Dorsolateral prefrontal cortex (tissue), 120 donors: ENCODE measurements at regions of chr9 and their contacts with region 1.

Region 1: DNA sequence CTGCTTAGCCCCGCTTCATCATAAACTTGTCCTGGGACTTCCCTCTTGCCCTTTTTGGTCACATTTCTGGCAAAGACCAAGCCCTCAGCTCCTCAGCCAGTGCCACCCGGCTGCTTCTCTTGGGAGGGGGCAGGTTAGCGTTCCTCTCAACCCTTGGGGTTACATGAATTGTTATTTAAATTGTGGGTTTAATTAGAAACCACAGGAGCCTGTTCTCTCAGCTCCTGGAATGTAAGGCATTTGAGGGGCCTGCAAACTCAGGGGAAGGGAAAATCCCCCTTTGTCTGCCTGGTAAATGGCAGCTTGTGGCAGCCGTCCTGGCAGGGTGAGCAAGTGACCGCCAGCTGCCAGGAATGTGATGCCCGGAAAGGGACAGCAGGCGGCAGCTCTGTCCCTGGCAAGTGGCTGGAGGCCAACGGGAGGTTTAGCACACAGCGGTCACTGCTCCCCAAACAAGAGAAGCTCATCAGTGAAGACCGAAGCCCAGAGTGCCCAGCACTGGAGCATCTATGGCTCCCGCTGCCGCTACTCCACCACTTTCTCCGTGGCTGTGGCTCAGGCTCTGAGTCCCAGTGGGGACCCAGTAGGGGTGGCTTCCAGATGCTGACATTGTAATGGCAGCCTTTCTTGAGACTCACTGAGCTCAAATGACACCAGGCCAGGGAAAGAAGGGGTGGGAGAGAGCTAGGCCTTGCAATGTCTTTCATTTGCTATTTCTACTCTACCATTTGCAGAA is 51.7 kb downstream of the SHB start:
- DNase-seq: peak; percentile 76 to 91 (median 88)
- H3K4me3 ChIP-seq: peak overlapping the region in 11 of 59 donors; percentile 2 to 36 (median 11)
- H3K27ac ChIP-seq: peak overlapping the region in 57 of 59 donors; percentile 7 to 93 (median 83)
- H3K27me3 ChIP-seq: no peaks in the 10 kb centered on the region
- CTCF ChIP-seq: peak in 54 of 56 donors; percentile 16 to 85 (median 64)

Region 2: GRCh38 chr9:37976714-37977477 is 40.4 kb before region 1 on chr9:
- intact Hi-C with region 1: no loop called
- DNase-seq: no peak
- H3K4me3 ChIP-seq: no peak overlapping the region
- H3K27ac ChIP-seq: peak overlapping the region in 42 of 59 donors; percentile 2 to 99 (median 52)
- H3K27me3 ChIP-seq: no peaks in the 10 kb centered on the region
- CTCF ChIP-seq: no peak

Region 3: DNA sequence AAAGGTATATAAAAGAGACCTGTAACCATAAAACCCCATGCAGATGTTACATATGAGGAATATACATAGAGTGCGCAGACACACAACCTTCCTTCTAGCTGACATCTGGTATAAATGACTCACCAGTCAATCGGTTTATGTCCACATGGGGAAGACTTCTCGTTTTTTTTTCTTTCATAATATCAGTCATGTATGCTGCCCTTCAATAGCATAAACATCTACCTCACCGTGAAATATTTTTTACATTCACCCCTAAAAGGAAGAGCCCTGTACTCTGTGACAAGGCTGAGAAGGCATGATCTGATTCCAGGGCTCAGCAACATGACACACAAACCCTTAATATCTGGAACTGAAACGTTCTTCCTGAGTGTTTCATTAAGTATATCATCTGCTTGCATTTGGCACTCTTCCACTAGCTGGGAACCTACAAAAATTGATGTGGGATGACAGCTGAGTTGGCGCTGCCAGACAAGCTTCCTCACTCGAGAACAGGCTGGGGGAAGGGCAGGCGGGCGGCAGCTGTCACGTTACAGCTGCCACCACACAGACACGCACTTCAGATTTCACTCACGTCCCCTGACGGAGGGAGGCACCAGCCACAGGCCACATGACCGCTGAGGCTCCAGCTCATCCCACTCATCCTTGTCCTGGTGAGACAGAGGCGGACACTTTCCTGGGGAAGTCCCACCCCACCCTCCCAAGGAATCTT is 22.5 kb before region 1 on chr9:
- intact Hi-C with region 1: loop called in 1 of 2 experiments (anchors 2 kb)
- DNase-seq: peak; percentile 46 to 97 (median 94)
- H3K4me3 ChIP-seq: peak overlapping the region in 30 of 59 donors; percentile 2 to 46 (median 23)
- H3K27ac ChIP-seq: peak overlapping the region; percentile 82 to 99 (median 96)
- H3K27me3 ChIP-seq: no peaks in the 10 kb centered on the region
- CTCF ChIP-seq: peak in 15 of 56 donors; percentile 2 to 47 (median 26)

Region 4: GRCh38 chr9:38051780-38052546 is 34.6 kb after region 1 on chr9:
- intact Hi-C with region 1: loop called in 1 of 2 experiments (anchors 5 kb)
- DNase-seq: no peak
- H3K4me3 ChIP-seq: no peak overlapping the region
- H3K27ac ChIP-seq: peak overlapping the region in 15 of 59 donors; percentile 4 to 64 (median 36)
- H3K27me3 ChIP-seq: no peaks in the 10 kb centered on the region
- CTCF ChIP-seq: no peak